Activated CD4-positive, alpha-beta memory T cell treated with anti-CD3 and anti-CD28 coated beads for 36 hours (primary cell): ENCODE measurements at regions of chr13 and their contacts with region 1.

Region 1: DNA sequence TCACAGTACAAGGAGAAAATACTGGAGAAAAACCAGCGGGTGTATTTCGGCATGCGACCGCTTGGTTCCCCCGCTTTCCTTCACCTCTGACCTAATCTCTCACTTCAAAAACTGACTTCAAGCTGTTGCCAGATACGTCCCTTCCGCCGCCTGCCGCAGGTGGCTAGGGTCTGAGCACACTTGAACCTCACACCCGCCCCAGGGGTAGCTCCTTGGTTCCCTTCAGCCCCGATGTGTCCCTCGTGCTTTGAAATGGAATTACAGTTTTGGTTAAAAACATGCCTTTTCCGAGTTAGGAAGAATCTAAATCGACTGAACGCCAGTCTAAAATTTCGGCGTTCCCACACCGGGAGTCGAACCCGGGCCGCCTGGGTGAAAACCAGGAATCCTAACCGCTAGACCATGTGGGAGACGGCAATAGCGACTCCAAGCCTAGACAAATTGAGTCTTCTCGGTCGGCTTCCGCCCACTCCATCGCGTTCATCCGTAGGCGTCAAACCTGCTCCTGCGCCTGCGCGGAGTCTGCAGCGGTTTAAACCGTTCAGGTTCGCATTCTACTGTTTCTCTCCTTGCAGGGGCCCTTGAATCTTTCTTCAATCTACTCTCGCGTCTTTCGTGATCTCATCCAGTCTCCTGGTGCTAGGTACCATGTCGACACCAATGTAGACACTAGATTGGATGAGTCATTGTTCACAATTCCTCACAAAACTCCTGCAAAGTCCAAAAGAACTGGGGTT is 71.5 kb downstream of the NUFIP1 start:
- DNase-seq: peak; percentile 97
- H3K4me3 Mint-ChIP-seq: no peak overlapping the region
- H3K27ac Mint-ChIP-seq: no peak overlapping the region
- H3K4me1 Mint-ChIP-seq: no peaks in the 10 kb centered on the region
- H3K27me3 Mint-ChIP-seq: no peaks in the 10 kb centered on the region

Region 2: DNA sequence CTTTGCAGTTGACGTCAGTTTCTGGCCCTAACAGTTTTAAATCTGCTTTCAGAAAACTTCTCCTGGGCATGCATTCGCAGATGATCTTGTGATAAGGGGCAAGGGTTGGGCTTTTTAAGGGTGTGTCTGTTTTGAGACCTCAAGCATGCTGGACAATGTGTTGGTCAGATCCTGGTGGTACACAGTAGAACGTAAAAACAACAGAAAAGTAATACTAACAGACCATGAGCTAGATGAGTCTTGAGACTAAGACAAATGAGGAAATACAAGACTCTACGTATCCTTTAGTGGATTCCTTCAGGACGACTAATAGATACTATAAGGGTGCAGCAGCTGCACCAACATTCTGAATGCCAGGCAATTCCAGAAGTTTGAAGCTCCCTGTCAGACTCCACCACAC is 1656.8 kb before region 1 on chr13:
- CTCF ChIA-PET with region 1: no interaction called
- POLR2A ChIA-PET with region 1: no interaction called
- intact Hi-C with region 1: no loop called
- DNase-seq: no peak
- H3K4me3 Mint-ChIP-seq: no peak overlapping the region
- H3K27ac Mint-ChIP-seq: no peak overlapping the region
- H3K4me1 Mint-ChIP-seq: no peaks in the 10 kb centered on the region
- H3K27me3 Mint-ChIP-seq: peaks cover 3% of the 10 kb centered on the region

Region 3: DNA sequence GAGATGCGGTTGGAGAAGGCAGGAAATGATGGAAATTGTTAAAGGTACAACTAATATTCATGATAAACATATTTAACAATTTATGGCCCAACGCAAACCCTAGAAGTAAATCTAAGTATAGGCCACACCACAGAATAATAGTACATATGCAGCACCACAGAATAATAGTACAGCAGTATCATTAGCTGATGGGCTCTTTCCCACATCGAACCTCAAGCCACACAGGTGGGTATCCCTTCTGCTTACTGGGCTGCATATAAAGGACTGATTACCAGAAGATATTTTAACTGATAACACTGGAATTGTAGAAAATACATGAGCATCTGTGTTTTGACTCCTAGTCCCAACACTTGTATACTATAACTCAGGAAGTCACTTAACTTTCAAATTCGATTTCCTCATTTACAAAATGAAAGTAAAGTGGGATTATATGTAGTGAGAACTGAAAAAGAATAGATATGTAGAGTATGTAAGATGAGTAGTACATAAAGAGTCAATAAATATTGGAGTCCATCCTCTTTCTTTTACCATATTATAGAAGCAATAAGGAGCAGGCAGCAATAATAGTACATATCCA is 433.1 kb before region 1 on chr13:
- CTCF ChIA-PET with region 1: interaction called, 12 read pairs
- POLR2A ChIA-PET with region 1: no interaction called
- intact Hi-C with region 1: loop called (anchors 1 kb)
- DNase-seq: no peak
- H3K4me3 Mint-ChIP-seq: peak overlapping the region; percentile 46
- H3K27ac Mint-ChIP-seq: peak overlapping the region; percentile 13
- H3K4me1 Mint-ChIP-seq: peaks cover 13% of the 10 kb centered on the region
- H3K27me3 Mint-ChIP-seq: no peaks in the 10 kb centered on the region

Region 4: DNA sequence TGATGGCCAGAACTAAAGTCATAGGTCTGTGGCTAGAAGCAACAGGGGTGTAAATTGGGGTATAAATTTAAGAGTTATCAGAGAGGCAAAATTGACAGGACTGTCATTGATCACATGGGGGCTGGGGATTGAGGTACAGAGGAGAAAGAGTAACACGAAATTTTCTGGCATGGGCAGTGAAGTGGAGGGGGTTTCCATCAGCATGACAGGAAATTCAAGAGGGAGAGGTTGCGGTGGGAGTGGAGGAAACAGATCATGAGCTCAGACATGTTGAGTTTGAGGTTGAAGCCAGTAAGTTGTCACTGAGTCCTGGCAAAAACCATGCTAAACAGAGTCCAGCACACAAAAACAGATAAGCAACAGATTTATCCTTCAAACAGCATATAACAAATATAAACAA is 149.5 kb before region 1 on chr13:
- CTCF ChIA-PET with region 1: no interaction called
- POLR2A ChIA-PET with region 1: no interaction called
- intact Hi-C with region 1: loop called (anchors 5 kb)
- DNase-seq: peak; percentile 65
- H3K4me3 Mint-ChIP-seq: no peak overlapping the region
- H3K27ac Mint-ChIP-seq: peak overlapping the region; percentile 51
- H3K4me1 Mint-ChIP-seq: peaks cover 27% of the 10 kb centered on the region
- H3K27me3 Mint-ChIP-seq: no peaks in the 10 kb centered on the region

Region 5: GRCh38 chr13:44904967-44905366 is 12.8 kb before region 1 on chr13:
- CTCF ChIA-PET with region 1: no interaction called
- POLR2A ChIA-PET with region 1: no interaction called
- intact Hi-C with region 1: no loop called
- DNase-seq: no peak
- H3K4me3 Mint-ChIP-seq: no peak overlapping the region
- H3K27ac Mint-ChIP-seq: no peak overlapping the region
- H3K4me1 Mint-ChIP-seq: no peaks in the 10 kb centered on the region
- H3K27me3 Mint-ChIP-seq: peaks cover 11% of the 10 kb centered on the region

Region 6: GRCh38 chr13:44988973-44989817 is 71.4 kb after region 1 on chr13 and contains the starts of genes GPALPP1 and NUFIP1:
- CTCF ChIA-PET with region 1: interaction called, 3 read pairs
- POLR2A ChIA-PET with region 1: no interaction called
- intact Hi-C with region 1: loop called (anchors 1 kb)
- DNase-seq: peak; percentile 96
- H3K4me3 Mint-ChIP-seq: peak within 1 kb of the TSS; percentile 97
- H3K27ac Mint-ChIP-seq: peak within 1 kb of the TSS; percentile 92
- H3K4me1 Mint-ChIP-seq: peaks cover 58% of the 10 kb centered on the region
- H3K27me3 Mint-ChIP-seq: no peaks in the 10 kb centered on the region
- total RNA-seq, gene GPALPP1: 30.1 to 32.7 TPM
- total RNA-seq, gene NUFIP1: 9.3 to 9.5 TPM

Region 7: GRCh38 chr13:45417790-45418534 is 500.2 kb after region 1 on chr13 and contains the start of gene SLC25A30:
- CTCF ChIA-PET with region 1: no interaction called
- POLR2A ChIA-PET with region 1: no interaction called
- intact Hi-C with region 1: loop called (anchors 5 kb)
- DNase-seq: peak; percentile 93
- H3K4me3 Mint-ChIP-seq: peak within 1 kb of the TSS; percentile 84
- H3K27ac Mint-ChIP-seq: peak within 1 kb of the TSS; percentile 88
- H3K4me1 Mint-ChIP-seq: peaks cover 16% of the 10 kb centered on the region
- H3K27me3 Mint-ChIP-seq: no peaks in the 10 kb centered on the region
- total RNA-seq, gene SLC25A30: 14.6 to 15.3 TPM